ENCODE measurements at regions of chr11 and their contacts with region 1.

Region 1: GRCh38 chr11:120482149-120482548 is 29.4 kb upstream of the GRIK4 start:
- DNase-seq: no peak
- ATAC-seq: no peak

Region 2: GRCh38 chr11:120432056-120433018 is 49.8 kb before region 1 on chr11:
- intact Hi-C with region 1: loop called (anchors 5 kb)
- DNase-seq: no peak
- ATAC-seq: peak; percentile 86

Measured in Right ventricle myocardium inferior (tissue), 1 donor.